ENCODE measurements at regions of chr5 and their contacts with region 1.

Region 1: GRCh38 chr5:141691867-141692532 is 10.0 kb upstream of the ARAP3 start:
- DNase-seq: peak; percentile 91
- H3K4me3 Mint-ChIP-seq: peak overlapping the region; percentile 60
- H3K27ac Mint-ChIP-seq: peak overlapping the region; percentile 85
- H3K4me1 Mint-ChIP-seq: peaks cover 34% of the 10 kb centered on the region
- H3K27me3 Mint-ChIP-seq: peaks cover 31% of the 10 kb centered on the region

Region 2: GRCh38 chr5:141476132-141476911 is 215.7 kb before region 1 on chr5:
- CTCF ChIA-PET with region 1: no interaction called
- POLR2A ChIA-PET with region 1: no interaction called
- DNase-seq: no peak
- H3K4me3 Mint-ChIP-seq: peak overlapping the region; percentile 66
- H3K27ac Mint-ChIP-seq: peak overlapping the region; percentile 18
- H3K4me1 Mint-ChIP-seq: peaks cover 23% of the 10 kb centered on the region
- H3K27me3 Mint-ChIP-seq: peaks cover 70% of the 10 kb centered on the region

Region 3: DNA sequence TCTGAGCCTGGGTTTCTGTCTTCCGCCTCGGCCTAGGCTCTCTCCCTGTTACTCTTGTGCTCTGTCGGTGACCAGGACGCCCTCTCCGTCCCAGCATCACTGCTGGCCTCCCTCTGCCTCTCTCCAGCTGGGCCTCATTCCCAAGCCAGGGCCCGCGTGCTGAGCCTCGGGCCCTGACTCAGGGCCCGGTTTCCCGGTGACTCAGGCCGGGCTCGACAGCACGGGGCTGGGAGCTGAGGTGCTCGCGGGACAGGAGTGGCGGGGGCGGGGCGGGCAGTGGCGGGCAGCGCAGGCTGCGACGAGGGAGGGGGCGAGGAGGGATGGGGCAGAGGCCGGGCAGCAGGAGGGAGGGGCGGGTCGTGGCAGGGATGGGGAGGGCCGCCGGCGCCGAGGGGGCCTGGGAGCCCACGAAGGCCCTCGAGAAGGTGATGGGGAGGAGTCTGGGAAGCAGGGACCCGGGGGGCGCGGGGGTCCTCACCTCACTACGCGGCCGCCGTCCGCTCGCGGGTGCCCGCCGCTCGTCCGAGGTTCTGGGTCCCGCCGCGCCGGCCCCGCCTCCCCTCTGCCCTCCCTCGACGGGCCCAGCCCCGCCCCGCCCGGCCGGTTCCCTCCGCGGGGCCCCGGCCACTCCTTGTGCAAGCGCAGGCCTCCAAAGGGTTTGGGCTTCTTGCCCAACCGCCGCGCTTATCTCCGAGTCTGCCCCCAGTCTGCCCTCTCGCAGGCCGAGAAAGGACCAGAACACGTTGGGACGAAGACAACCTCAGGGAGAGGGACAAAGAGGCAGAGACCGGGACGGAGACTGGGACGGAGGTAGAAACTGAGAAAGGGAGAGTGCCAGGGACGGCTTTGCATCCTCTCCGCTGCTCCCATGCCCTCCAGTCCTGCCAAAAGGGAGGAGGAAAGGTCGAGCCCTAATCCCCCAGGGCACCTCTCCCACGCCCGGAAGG is 10.0 kb before region 1 on chr5 and contains the start of gene ARAP3:
- CTCF ChIA-PET with region 1: interaction called, 55 read pairs
- POLR2A ChIA-PET with region 1: interaction called, 15 read pairs
- DNase-seq: peak; percentile 54
- H3K4me3 Mint-ChIP-seq: peak within 1 kb of the TSS; percentile 79
- H3K27ac Mint-ChIP-seq: peak within 1 kb of the TSS; percentile 70
- H3K4me1 Mint-ChIP-seq: peaks cover 41% of the 10 kb centered on the region
- H3K27me3 Mint-ChIP-seq: peaks cover 5% of the 10 kb centered on the region
- total RNA-seq, gene ARAP3: 13.6 to 13.9 TPM

Region 4: DNA sequence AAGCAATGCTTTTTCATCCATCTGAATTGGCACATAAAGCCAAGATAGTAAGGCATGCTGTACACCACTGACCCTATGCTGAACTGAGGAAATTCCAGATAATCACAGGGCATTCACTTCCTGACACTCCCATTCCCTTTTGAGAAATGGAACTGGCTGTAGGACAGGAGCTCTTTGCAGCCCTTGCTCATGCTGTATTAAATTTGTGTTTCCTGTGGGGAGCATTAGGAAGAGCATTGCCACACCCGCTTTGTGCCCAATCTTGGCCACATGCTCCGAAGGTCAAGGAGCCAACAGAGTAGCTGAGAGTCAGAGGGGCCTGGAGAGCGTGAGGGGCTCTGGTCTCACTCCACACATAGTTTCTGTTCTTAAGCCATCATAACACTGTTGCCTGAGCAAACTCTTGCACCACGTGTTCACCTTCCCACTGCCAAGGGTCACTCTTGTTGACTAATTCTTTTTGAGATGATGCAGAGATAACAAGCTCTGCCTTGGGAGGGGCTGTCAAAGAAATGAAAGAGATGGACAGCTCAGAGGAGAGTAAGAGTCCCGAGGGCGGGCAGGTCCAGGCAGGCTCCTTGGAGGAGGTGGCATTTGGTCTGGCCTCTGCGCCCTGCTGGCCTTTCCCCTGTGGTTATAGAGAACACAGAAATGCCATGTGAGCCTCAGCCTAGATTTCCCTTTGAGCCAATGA is 21.8 kb after region 1 on chr5:
- CTCF ChIA-PET with region 1: no interaction called
- POLR2A ChIA-PET with region 1: no interaction called
- DNase-seq: no peak
- H3K4me3 Mint-ChIP-seq: no peak overlapping the region
- H3K27ac Mint-ChIP-seq: no peak overlapping the region
- H3K4me1 Mint-ChIP-seq: peaks cover 3% of the 10 kb centered on the region
- H3K27me3 Mint-ChIP-seq: peaks cover 14% of the 10 kb centered on the region

Region 5: GRCh38 chr5:141825791-141826560 is 134.0 kb after region 1 on chr5:
- CTCF ChIA-PET with region 1: interaction called, 46 read pairs
- POLR2A ChIA-PET with region 1: interaction called, 3 read pairs
- DNase-seq: peak; percentile 26
- H3K4me3 Mint-ChIP-seq: no peak overlapping the region
- H3K27ac Mint-ChIP-seq: no peak overlapping the region
- H3K4me1 Mint-ChIP-seq: peaks cover 10% of the 10 kb centered on the region
- H3K27me3 Mint-ChIP-seq: peaks cover 37% of the 10 kb centered on the region

Region 6: GRCh38 chr5:141889282-141889871 is 197.4 kb after region 1 on chr5:
- CTCF ChIA-PET with region 1: interaction called, 16 read pairs
- POLR2A ChIA-PET with region 1: no interaction called
- DNase-seq: no peak
- H3K4me3 Mint-ChIP-seq: no peak overlapping the region
- H3K27ac Mint-ChIP-seq: no peak overlapping the region
- H3K4me1 Mint-ChIP-seq: no peaks in the 10 kb centered on the region
- H3K27me3 Mint-ChIP-seq: peaks cover 38% of the 10 kb centered on the region

Region 7: DNA sequence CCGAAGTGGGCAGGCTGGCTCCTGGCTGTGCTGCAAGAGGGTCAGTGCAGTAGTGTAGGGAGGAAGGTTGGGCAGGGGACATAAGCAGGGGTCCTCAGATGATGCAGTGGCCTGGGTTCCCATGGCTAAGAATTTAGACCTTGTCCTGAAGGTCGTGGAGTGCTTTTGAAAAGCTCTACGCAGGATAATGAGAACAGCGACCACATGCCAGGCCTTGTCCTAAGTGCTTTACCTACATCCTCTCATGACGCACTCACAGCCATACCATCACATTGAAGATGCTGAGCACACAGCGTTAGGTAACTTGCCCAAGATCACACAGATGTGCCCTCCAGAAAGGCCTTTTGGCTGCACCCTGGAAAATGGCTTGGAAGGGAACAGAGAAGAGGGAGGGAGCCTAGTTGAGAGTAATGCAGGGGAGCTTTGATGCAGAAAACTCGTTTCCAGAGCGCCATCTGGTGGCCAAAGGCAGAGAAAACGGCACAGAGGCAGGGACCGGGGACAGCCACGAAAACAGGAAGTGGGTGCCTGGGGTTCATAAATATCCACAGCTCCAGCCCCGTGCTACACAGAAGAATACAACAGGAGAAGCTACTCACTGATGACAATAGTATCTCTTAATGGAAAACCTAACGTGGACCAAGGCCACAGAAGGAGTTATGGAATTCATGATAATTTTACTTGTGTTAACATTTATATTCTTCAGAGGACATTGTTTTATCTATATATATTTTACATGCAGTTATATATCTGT is 268.6 kb after region 1 on chr5:
- CTCF ChIA-PET with region 1: interaction called, 214 read pairs
- POLR2A ChIA-PET with region 1: interaction called, 49 read pairs
- DNase-seq: peak; percentile 93
- H3K4me3 Mint-ChIP-seq: peak overlapping the region; percentile 46
- H3K27ac Mint-ChIP-seq: peak overlapping the region; percentile 80
- H3K4me1 Mint-ChIP-seq: peaks cover 51% of the 10 kb centered on the region
- H3K27me3 Mint-ChIP-seq: no peaks in the 10 kb centered on the region

Region 8: DNA sequence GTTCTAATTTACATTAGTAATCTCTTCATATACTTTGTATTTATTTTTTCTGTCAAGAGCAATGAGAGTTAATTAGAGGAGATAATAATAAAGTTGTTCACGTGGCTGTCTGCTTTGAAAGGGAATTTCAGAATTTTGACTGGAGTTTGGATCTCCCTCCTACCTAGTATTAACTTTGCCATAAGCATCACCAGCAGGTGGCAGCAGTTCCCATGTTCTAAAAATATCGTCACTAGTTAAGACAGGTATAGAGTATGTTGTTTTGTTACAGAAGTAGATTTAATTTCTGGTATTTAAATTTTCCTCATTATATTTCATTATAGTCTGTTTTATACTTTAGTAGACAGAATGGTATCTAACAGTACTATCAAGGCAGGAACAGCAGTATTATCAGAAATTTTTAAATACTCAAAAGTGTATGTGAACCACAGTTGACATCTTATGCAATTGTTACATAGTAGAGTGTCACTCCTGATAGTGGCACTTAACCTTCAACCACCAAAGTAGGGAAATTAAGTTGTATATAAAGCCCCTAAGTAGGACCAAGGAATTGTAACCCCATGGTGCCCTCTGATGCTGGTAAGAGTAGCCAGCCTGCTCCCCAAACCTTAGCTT is 300.5 kb after region 1 on chr5:
- CTCF ChIA-PET with region 1: interaction called, 21 read pairs
- POLR2A ChIA-PET with region 1: interaction called, 4 read pairs
- DNase-seq: peak; percentile 79
- H3K4me3 Mint-ChIP-seq: no peak overlapping the region
- H3K27ac Mint-ChIP-seq: no peak overlapping the region
- H3K4me1 Mint-ChIP-seq: peaks cover 2% of the 10 kb centered on the region
- H3K27me3 Mint-ChIP-seq: no peaks in the 10 kb centered on the region

Measured in activated CD4-positive, alpha-beta memory T cell treated with anti-CD3 and anti-CD28 coated beads, Interleukin-2, amount 10 ng/mL, durations not matched to agents 7 days and 5 days (primary cell).